Naive thymus-derived CD4-positive, alpha-beta T cell (primary cell): ENCODE measurements at regions of chr12 and their contacts with region 1.

Region 1: DNA sequence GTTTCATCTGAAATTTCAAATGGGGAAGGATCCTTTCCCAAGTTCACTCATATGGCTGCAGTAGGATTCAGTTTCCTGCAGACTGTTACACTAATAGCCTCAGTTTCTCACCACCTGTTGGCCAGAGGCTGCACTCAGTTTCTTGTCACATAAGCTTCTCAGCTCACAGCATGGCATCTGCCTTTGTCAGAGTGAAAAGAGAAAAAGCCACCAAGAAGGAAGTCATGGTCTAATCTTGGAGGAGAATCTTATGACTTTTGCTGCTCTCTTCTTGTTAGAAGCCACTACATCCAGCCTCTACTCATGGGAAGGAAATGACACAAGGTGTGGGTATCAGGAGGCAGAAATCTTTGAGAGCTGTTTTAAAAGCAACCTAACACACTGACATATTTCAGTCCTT is 39.4 kb upstream of the BTG1 start:
- DNase-seq: peak in 8 of 9 donors; percentile 30 to 70 (median 56)
- ATAC-seq: peak; percentile 88
- H3K4me3 ChIP-seq: no peak overlapping the region
- H3K4me3 Mint-ChIP-seq: peak overlapping the region; percentile 28 to 77 (median 68)
- H3K27ac ChIP-seq: peak overlapping the region; percentile 74
- H3K27ac Mint-ChIP-seq: peak overlapping the region; percentile 83 to 96 (median 93)
- H3K4me1 ChIP-seq: peaks cover 22 to 29% of the 10 kb centered on the region in 2 donors
- H3K4me1 Mint-ChIP-seq: peaks cover 23 to 71% (median 60%) of the 10 kb centered on the region in 7 donors
- H3K27me3 ChIP-seq: no peaks in the 10 kb centered on the region
- H3K27me3 Mint-ChIP-seq: no peaks in the 10 kb centered on the region

Region 2: DNA sequence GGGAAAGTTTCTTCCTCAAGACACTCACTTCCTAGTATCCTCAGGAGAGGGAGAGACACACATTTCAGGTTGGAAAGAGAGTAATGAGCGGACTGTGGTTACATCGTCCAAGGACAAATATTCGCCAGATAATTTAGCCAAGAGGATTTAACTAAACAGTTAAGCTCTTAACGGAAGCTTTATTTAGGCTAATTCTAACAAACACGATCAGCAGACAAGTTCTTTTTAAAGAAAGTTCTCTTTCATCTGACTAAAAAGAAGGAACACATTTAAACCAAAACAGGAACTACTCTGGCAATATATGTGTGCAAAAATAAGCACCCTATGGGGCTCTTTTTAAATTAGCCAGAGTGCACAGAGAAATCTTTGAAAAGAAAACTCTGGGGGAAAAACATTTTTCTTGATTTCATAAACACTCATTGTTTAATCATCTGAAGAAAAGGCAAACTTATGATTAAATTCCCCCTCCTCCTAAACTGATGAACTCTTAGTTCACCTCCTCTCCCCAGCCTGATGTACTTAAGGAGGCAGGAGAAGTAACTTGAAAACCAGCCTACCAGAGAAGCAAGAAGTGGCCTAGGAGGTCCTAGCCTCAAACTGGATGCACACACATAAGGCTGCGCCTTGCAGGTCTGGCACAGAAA is 26.1 kb before region 1 on chr12:
- CTCF ChIA-PET with region 1: interaction called, 3 read pairs
- POLR2A ChIA-PET with region 1: interaction called, 5 read pairs
- intact Hi-C with region 1: loop called in 1 of 2 experiments (anchors 1 kb)
- DNase-seq: peak in 4 of 9 donors; percentile 32 to 58 (median 48)
- ATAC-seq: peak; percentile 84
- H3K4me3 ChIP-seq: peak overlapping the region; percentile 15
- H3K4me3 Mint-ChIP-seq: peak overlapping the region; percentile 49 to 87 (median 76)
- H3K27ac ChIP-seq: peak overlapping the region; percentile 70
- H3K27ac Mint-ChIP-seq: peak overlapping the region; percentile 65 to 99 (median 95)
- H3K4me1 ChIP-seq: peaks cover 0 to 46% of the 10 kb centered on the region in 2 donors
- H3K4me1 Mint-ChIP-seq: peaks cover 28 to 92% (median 78%) of the 10 kb centered on the region in 7 donors
- H3K27me3 ChIP-seq: no peaks in the 10 kb centered on the region
- H3K27me3 Mint-ChIP-seq: no peaks in the 10 kb centered on the region

Region 3: GRCh38 chr12:92170050-92170449 is 15.0 kb before region 1 on chr12:
- CTCF ChIA-PET with region 1: no interaction called
- POLR2A ChIA-PET with region 1: interaction called, 5 read pairs
- intact Hi-C with region 1: loop called in 1 of 2 experiments (anchors 2 kb)
- DNase-seq: no peak
- ATAC-seq: no peak
- H3K4me3 ChIP-seq: no peak overlapping the region
- H3K4me3 Mint-ChIP-seq: no peak overlapping the region
- H3K27ac ChIP-seq: no peak overlapping the region
- H3K27ac Mint-ChIP-seq: peak overlapping the region in 3 of 9 donors; percentile 1 to 65 (median 5)
- H3K4me1 ChIP-seq: peaks cover 0 to 16% of the 10 kb centered on the region in 2 donors
- H3K4me1 Mint-ChIP-seq: peaks cover 8 to 47% (median 41%) of the 10 kb centered on the region in 7 donors
- H3K27me3 ChIP-seq: no peaks in the 10 kb centered on the region
- H3K27me3 Mint-ChIP-seq: no peaks in the 10 kb centered on the region

Region 4: DNA sequence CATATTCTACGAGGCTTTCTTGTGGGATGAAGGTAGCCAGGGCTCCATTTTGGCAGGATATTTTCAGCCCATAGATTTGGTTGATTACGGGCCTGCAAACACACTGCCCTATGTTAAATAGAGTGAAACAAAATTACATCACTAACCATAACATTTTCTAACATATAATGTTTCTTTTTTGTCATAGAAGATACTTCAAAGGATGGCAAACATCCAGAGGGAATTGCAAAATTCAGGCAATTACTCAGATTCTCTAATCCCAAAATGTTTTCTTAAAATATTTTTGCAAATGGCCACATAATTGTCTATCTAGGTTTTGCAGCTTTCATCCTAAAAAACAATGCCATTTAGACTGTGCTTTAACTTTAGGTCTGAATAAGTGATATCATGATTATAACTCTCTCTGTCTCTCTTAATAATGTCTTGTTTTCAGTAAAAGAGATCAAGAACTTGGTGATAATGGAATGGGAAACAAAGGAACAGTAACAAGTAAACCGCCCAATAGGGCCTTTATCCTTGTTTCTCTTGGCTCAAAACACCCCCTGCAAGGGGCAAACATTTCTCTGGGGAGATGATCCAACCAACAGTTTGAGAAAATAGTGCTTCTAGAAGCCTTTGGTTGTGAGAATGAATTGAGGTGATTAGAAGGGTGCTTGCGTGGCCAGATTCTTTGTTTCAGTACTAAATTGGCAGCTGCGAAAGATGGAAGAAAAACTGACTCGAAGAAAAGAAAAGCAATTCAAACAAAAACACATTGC is 14.9 kb after region 1 on chr12:
- CTCF ChIA-PET with region 1: no interaction called
- POLR2A ChIA-PET with region 1: interaction called, 6 read pairs
- intact Hi-C with region 1: loop called in 1 of 2 experiments (anchors 1 kb)
- DNase-seq: no peak
- ATAC-seq: no peak
- H3K4me3 ChIP-seq: no peak overlapping the region
- H3K4me3 Mint-ChIP-seq: no peak overlapping the region
- H3K27ac ChIP-seq: no peak overlapping the region
- H3K27ac Mint-ChIP-seq: no peak overlapping the region
- H3K4me1 ChIP-seq: no peaks in the 10 kb centered on the region
- H3K4me1 Mint-ChIP-seq: peaks cover 0 to 28% (median 21%) of the 10 kb centered on the region in 7 donors
- H3K27me3 ChIP-seq: no peaks in the 10 kb centered on the region
- H3K27me3 Mint-ChIP-seq: no peaks in the 10 kb centered on the region

Region 5: GRCh38 chr12:92234533-92234932 is 49.5 kb after region 1 on chr12:
- CTCF ChIA-PET with region 1: no interaction called
- POLR2A ChIA-PET with region 1: no interaction called
- intact Hi-C with region 1: loop called in 1 of 2 experiments (anchors 2 kb)
- DNase-seq: peak in 6 of 9 donors; percentile 19 to 60 (median 42)
- ATAC-seq: peak; percentile 52
- H3K4me3 ChIP-seq: no peak overlapping the region
- H3K4me3 Mint-ChIP-seq: peak overlapping the region in 9 of 10 donors; percentile 13 to 78 (median 65)
- H3K27ac ChIP-seq: no peak overlapping the region
- H3K27ac Mint-ChIP-seq: peak overlapping the region in 8 of 9 donors; percentile 51 to 92 (median 84)
- H3K4me1 ChIP-seq: peaks cover 0 to 22% of the 10 kb centered on the region in 2 donors
- H3K4me1 Mint-ChIP-seq: peaks cover 6 to 48% (median 38%) of the 10 kb centered on the region in 7 donors
- H3K27me3 ChIP-seq: no peaks in the 10 kb centered on the region
- H3K27me3 Mint-ChIP-seq: no peaks in the 10 kb centered on the region

Region 6: DNA sequence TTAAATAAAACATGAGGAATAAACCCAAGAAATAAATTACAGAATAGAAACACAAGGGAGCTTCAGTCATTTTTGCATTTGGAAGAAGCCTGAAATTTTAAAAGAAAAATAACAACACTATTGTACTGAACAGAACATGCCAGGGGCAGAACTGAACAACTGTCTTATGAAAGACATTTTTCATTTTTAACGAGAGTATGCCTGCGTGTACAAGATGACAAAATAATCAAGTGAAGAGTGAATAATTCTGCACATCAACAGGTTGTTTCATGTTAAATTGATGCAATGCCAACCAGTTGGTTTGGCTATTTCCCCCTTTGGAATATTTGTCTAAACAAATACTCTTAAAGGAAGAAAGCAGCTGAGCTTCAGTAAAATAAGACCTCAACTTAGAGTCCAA is 63.9 kb after region 1 on chr12:
- CTCF ChIA-PET with region 1: no interaction called
- POLR2A ChIA-PET with region 1: no interaction called
- intact Hi-C with region 1: no loop called
- DNase-seq: no peak
- ATAC-seq: no peak
- H3K4me3 ChIP-seq: no peak overlapping the region
- H3K4me3 Mint-ChIP-seq: no peak overlapping the region
- H3K27ac ChIP-seq: no peak overlapping the region
- H3K27ac Mint-ChIP-seq: no peak overlapping the region
- H3K4me1 ChIP-seq: peaks cover 0 to 8% of the 10 kb centered on the region in 2 donors
- H3K4me1 Mint-ChIP-seq: peaks cover 0 to 30% (median 14%) of the 10 kb centered on the region in 7 donors
- H3K27me3 ChIP-seq: no peaks in the 10 kb centered on the region
- H3K27me3 Mint-ChIP-seq: no peaks in the 10 kb centered on the region

Region 7: DNA sequence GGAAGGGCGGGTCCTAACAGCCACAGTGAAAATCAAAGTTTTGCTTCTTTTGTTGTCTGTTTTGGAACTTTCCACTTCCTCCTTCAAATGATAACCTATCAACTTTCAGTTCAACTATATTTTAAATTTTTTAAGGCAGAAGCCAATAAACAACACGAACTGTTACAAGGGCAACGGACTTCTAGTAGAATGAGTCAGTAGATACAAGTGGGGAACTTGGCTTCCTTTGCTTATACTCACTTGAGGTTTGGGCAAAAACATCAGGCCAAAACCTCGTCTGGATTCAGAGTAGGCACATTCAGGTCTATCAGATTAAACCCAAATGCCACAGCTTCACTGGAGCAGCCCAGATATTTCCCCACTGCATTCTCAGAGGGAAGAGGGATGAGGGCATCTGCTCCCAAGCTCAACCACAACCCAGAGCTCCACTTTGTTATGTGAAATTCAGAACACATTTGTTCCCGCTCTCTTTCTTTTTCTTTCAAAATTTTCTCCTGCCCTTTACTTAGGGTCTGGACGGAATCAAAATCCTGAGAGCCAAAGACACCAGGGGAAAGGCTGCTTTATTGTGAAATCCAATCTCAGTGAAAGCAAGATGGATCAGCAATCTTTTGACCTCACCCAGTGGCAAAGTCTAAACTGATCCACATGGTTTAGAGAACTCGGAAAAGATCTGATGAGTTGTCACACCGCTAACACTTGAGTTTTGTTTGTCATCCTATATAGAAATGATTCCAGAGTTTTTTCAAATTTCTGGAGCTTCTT is 113.1 kb after region 1 on chr12:
- CTCF ChIA-PET with region 1: no interaction called
- POLR2A ChIA-PET with region 1: no interaction called
- intact Hi-C with region 1: loop called in 1 of 2 experiments (anchors 5 kb)
- DNase-seq: peak in 7 of 9 donors; percentile 29 to 75 (median 58)
- ATAC-seq: peak; percentile 83
- H3K4me3 ChIP-seq: no peak overlapping the region
- H3K4me3 Mint-ChIP-seq: peak overlapping the region in 9 of 10 donors; percentile 9 to 80 (median 63)
- H3K27ac ChIP-seq: peak overlapping the region; percentile 57
- H3K27ac Mint-ChIP-seq: peak overlapping the region in 2 of 9 donors; percentile 85 to 96
- H3K4me1 ChIP-seq: peaks cover 17 to 42% of the 10 kb centered on the region in 2 donors
- H3K4me1 Mint-ChIP-seq: peaks cover 8 to 33% (median 27%) of the 10 kb centered on the region in 7 donors
- H3K27me3 ChIP-seq: no peaks in the 10 kb centered on the region
- H3K27me3 Mint-ChIP-seq: no peaks in the 10 kb centered on the region

Region 8: GRCh38 chr12:92369643-92370042 is 184.6 kb after region 1 on chr12:
- CTCF ChIA-PET with region 1: no interaction called
- POLR2A ChIA-PET with region 1: no interaction called
- intact Hi-C with region 1: no loop called
- DNase-seq: no peak
- ATAC-seq: no peak
- H3K4me3 ChIP-seq: no peak overlapping the region
- H3K4me3 Mint-ChIP-seq: no peak overlapping the region
- H3K27ac ChIP-seq: no peak overlapping the region
- H3K27ac Mint-ChIP-seq: peak overlapping the region in 1 of 9 donors; percentile 5
- H3K4me1 ChIP-seq: peaks cover 0 to 10% of the 10 kb centered on the region in 2 donors
- H3K4me1 Mint-ChIP-seq: peaks cover 6 to 65% (median 55%) of the 10 kb centered on the region in 7 donors
- H3K27me3 ChIP-seq: no peaks in the 10 kb centered on the region
- H3K27me3 Mint-ChIP-seq: no peaks in the 10 kb centered on the region